ENCODE measurements at regions of chr13 and their contacts with region 1.

Region 1: GRCh38 chr13:21176220-21176982 is at the starts of genes MRPL57 and SKA3:
- DNase-seq: peak; percentile 95
- H3K4me3 Mint-ChIP-seq: peak within 1 kb of the TSS; percentile 99
- H3K27ac Mint-ChIP-seq: peak within 1 kb of the TSS; percentile 93
- H3K4me1 Mint-ChIP-seq: peaks cover 44% of the 10 kb centered on the region
- H3K27me3 Mint-ChIP-seq: no peaks in the 10 kb centered on the region
- total RNA-seq, gene MRPL57: 18.2 to 18.5 TPM
- total RNA-seq, gene SKA3: 33.2 to 34.7 TPM

Region 2: DNA sequence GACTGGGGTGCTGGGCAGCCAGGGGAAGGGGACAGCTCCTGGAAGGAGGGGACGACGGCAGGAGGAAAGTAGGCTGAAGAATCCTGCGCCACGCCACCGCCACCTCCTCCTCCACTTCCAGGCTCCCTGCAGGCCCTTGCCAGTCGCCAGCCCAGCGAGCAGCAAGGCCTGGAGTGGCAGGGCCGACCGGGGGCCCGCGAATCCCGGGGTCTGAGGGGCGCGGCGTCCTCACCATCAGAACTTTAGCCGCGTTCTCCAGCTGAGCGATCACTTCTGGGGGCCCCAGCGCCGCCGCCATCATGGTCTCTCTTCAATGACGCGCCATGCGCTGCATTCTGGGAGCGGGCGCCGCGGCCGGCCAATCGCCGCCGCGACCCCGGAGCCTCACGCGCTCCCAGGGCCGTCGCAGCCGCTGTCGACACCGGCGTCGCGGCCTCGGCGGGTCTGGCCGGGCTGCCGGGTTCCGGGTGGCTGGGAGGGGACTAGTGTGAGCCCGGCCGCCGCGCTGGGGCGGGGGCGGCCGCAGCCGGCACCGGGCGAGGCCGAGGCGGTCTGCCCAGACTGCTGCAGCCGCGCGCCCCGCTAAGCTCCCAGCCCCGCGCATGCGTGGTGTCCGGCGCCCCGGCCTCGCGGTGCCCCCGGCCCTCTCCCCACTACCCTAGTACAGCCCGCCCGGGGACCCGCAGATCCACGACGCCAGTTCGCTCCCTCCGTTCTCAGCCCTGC is 273.8 kb before region 1 on chr13 and contains the start of gene XPO4:
- CTCF ChIA-PET with region 1: no interaction called
- POLR2A ChIA-PET with region 1: interaction called, 16 read pairs
- DNase-seq: peak; percentile 86
- H3K4me3 Mint-ChIP-seq: peak within 1 kb of the TSS; percentile 92
- H3K27ac Mint-ChIP-seq: peak within 1 kb of the TSS; percentile 89
- H3K4me1 Mint-ChIP-seq: peaks cover 36% of the 10 kb centered on the region
- H3K27me3 Mint-ChIP-seq: no peaks in the 10 kb centered on the region
- total RNA-seq, gene XPO4: 16.4 to 16.8 TPM

Region 3: GRCh38 chr13:21060987-21061763 is 115.2 kb before region 1 on chr13 and contains the start of gene LATS2:
- CTCF ChIA-PET with region 1: no interaction called
- POLR2A ChIA-PET with region 1: interaction called, 13 read pairs
- DNase-seq: peak; percentile 80
- H3K4me3 Mint-ChIP-seq: peak within 1 kb of the TSS; percentile 70
- H3K27ac Mint-ChIP-seq: peak within 1 kb of the TSS; percentile 55
- H3K4me1 Mint-ChIP-seq: peaks cover 16% of the 10 kb centered on the region
- H3K27me3 Mint-ChIP-seq: peaks cover 32% of the 10 kb centered on the region
- total RNA-seq, gene LATS2: 11.2 to 11.8 TPM

Region 4: GRCh38 chr13:21117104-21117809 is 59.1 kb before region 1 on chr13:
- CTCF ChIA-PET with region 1: no interaction called
- POLR2A ChIA-PET with region 1: no interaction called
- DNase-seq: no peak
- H3K4me3 Mint-ChIP-seq: no peak overlapping the region
- H3K27ac Mint-ChIP-seq: no peak overlapping the region
- H3K4me1 Mint-ChIP-seq: no peaks in the 10 kb centered on the region
- H3K27me3 Mint-ChIP-seq: no peaks in the 10 kb centered on the region

Region 5: DNA sequence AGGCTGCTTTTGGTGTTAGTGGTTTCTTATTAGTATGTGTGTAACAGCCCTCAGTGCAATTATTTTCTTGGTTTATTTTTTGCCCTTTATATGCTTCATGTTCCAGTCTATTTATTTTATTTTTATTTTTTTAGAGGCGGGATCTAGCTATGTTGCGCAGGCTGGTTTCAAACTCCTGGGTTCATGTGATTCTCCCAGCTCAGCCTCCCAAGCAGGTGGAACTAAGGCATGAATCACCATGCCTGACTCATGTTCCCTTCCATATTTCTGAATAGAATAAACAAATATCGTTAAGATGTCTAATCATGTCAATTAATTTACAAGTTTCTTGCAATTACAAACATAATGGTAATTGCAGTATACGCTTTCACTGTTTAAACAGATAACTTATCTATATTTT is 11.8 kb before region 1 on chr13:
- CTCF ChIA-PET with region 1: interaction called, 14 read pairs
- POLR2A ChIA-PET with region 1: interaction called, 36 read pairs
- DNase-seq: no peak
- H3K4me3 Mint-ChIP-seq: no peak overlapping the region
- H3K27ac Mint-ChIP-seq: no peak overlapping the region
- H3K4me1 Mint-ChIP-seq: no peaks in the 10 kb centered on the region
- H3K27me3 Mint-ChIP-seq: no peaks in the 10 kb centered on the region

Region 6: DNA sequence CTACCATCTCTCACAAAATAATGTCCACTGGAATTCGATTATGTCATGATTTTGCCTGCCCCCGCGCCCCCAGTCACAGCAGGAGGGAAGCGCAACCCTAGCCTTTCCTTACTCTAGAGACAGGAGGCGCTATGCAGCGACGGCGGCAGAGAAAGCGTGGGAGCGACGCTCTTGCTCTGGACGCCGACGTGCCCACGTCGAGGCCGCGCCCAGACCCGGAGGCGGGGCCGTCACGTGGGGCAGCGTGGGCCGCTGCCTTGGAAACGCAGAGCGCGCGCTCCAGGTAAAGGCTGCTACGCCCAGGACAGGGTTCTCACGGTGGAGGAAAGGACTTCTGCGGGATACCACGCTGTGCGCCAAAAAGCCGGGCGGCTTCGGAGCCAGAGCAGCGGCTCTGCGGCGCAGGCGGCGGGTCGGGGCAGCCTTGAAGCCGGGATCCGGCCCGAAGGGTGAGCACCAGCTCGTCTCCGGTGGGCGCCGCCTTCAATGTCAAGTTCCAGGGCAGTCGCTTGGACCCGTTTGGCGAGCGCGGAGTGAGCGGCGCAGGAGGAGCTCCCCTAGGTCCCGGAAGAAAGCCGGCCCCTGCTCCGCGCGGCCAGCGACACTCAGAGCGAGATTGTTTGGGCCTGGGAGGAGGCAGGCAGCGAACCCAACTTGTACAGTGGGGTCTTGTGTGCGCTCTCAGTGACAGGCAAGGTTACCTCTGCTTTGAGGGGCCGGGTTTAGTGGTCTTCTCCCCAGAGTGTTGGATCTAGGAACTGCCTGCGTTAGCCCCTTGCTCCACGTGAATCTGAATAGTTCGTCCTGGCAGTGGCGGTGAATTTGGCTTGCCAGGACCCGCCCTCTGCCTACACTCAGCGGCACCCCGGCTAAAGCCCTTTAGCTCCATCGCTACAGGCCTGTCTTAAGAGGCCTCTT is 121.8 kb after region 1 on chr13:
- CTCF ChIA-PET with region 1: interaction called, 26 read pairs
- POLR2A ChIA-PET with region 1: interaction called, 20 read pairs
- DNase-seq: peak; percentile 87
- H3K4me3 Mint-ChIP-seq: peak overlapping the region; percentile 84
- H3K27ac Mint-ChIP-seq: peak overlapping the region; percentile 29
- H3K4me1 Mint-ChIP-seq: peaks cover 28% of the 10 kb centered on the region
- H3K27me3 Mint-ChIP-seq: no peaks in the 10 kb centered on the region

Region 7: DNA sequence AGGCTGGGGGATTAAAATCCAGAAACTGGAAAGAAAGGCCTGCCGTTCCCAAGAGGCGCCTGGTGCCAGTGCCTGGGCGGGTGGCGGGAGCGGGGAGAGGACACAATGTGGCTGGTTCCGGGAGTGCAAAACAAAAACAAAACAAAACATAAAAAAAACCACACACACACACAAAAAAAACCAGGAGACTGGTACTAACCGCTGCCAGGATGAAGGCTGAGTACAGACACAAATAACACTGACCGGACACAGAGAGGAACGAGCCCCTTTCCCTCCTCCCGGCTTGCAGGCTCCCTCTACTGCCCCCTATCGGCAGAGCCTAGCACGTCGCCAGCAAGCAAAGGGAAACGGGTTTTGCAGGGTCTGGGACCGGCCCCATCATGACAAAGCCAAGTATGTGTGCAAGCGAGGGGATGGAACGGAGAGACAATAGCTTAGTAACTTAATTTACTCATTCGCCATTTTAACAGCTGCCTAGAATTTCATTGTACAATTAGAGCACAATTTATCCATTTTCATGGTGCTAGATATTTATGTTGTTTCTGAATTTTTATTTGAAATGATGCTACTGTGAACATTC is 300.6 kb after region 1 on chr13:
- CTCF ChIA-PET with region 1: interaction called, 22 read pairs
- POLR2A ChIA-PET with region 1: interaction called, 11 read pairs
- DNase-seq: peak; percentile 83
- H3K4me3 Mint-ChIP-seq: peak overlapping the region; percentile 76
- H3K27ac Mint-ChIP-seq: peak overlapping the region; percentile 60
- H3K4me1 Mint-ChIP-seq: peaks cover 14% of the 10 kb centered on the region
- H3K27me3 Mint-ChIP-seq: no peaks in the 10 kb centered on the region

Measured in activated CD4-positive, alpha-beta memory T cell treated with anti-CD3 and anti-CD28 coated beads, Interleukin-2, amount 10 ng/mL, durations not matched to agents 7 days and 5 days (primary cell).